PC-3 (cell line): ENCODE measurements at regions of chrX and their contacts with region 1.

Region 1: DNA sequence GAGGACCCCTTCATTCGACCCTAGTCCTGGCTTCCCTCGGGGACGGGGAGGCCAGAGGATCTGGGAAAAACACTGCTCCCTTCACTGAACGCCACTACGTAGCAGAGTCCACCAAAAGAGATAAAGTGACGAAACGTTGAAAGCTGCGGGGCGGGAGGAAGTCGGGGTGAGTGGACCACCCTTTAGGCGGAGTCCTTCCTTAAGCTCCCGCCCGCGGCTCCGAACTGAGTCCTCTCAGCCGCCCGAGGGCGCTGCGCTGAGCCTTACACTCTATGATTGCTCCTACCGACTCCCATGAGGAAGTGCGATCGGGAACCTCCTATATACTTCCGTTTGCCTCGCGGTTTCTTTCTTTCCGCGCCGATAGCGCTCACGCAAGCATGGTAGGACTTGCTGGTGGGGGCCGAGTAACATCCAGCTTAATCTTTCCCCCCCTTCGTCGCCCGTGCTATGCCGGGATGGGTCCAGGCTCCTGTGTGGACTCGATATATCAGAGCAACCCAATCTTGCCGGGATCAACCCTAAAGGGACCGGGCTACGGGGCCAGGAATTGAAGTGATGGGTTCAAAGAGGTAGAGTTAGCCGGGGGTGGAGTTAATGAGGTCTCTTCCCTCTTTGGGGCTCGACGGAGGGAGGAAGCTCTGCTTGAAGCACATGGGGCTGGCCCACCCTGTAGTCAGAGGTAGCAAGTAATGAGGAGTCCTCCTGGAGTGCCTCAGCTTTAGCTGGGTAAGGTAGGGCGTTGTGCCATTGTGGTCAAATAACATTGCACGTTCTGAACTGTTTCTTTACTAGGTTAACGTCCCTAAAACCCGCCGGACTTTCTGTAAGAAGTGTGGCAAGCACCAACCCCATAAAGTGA is at the start of gene RPL36A:
- DNase-seq: peak; percentile 93
- ATAC-seq: peak; percentile 97
- H3K4me3 ChIP-seq: peak within 1 kb of the TSS; percentile 95
- H3K27ac ChIP-seq: peak within 1 kb of the TSS; percentile 69
- H3K4me1 ChIP-seq: peaks cover 22% of the 10 kb centered on the region
- H3K27me3 ChIP-seq: no peaks in the 10 kb centered on the region
- CTCF ChIP-seq: peak; percentile 78
- total RNA-seq, gene RPL36A: 914 and 1,023 TPM in 2 replicates

Region 2: DNA sequence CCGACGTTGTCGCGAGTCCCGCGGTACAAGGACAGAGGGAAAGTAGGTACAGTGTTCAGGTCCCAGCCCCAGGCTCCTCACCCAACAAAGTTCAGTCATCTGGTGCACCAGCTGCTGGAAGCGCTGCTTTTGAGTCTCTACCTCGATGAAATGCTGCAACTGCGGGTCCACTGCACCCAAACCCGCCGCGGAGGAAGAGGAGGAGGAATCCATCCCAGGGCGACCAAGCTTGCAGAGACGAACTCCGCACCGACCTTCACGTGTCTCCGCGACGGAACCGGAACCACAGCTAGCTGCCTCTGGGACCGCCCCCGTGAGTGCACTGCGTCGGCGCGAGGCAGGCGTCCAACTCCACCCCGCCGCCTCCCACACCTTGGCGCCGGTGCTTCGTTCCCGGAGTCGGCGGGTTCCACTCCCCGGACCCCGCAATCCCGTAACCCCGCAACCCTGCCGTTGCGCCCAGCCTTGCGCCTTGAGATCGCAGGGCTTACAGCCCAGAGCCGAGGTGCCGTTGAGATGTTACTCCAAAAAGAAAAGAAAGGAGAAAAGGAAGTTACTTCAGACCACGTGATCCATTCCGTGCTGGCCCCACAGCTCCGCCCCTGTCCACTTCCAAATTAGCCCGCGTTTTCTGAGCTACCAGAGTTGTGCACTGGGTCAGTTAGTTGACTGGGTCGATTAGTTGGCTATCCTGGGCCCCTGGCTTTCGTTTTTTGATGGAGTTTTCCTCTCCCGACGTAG is 42.3 kb before region 1 on chrX and contains the start of gene TIMM8A:
- CTCF ChIA-PET with region 1: interaction called, 3 read pairs
- POLR2A ChIA-PET with region 1: no interaction called
- intact Hi-C with region 1: loop called (anchors 2 kb)
- DNase-seq: peak; percentile 77
- ATAC-seq: peak; percentile 94
- H3K4me3 ChIP-seq: peak within 1 kb of the TSS; percentile 96
- H3K27ac ChIP-seq: peak within 1 kb of the TSS; percentile 78
- H3K4me1 ChIP-seq: peaks cover 15% of the 10 kb centered on the region
- H3K27me3 ChIP-seq: no peaks in the 10 kb centered on the region
- CTCF ChIP-seq: no peak
- total RNA-seq, gene TIMM8A: 5.0 and 7.8 TPM in 2 replicates

Region 3: DNA sequence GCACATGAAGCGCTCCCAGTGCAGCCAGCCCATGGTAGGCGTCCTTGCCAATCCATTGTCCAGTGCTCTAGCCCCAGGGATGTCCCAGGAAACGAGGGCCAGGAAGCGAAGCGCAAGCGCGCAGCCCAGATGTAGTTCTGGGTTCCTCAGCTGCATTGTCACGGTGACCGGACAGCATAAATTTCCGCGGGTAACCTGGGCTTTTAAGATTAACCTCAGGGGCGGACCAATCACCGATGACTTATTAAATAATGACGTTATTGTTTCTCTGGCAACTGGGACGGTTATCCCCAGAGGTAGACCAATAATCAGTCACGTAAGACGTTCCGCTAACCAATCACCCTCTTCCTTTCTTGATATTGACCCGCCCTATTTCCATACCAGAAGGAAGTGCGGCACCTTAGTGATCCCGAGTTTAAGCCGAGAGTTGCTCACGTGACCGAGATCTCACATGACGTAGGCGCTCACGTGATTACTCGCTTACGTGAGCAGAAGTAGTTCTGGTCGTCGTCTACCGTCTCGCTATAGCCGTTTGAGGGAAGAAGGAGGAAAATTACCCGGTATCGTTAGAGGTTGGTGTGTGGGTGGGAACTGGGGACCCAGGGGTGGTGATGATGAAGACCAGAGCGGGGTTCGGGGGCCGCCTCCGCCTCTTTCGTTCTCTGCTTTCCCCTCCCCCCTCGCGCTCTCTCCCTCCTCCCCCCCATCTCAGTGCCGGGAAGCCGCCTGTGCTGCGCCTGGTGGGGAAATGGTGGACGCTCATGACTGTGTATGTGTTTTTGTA is 17.0 kb after region 1 on chrX and contains the starts of genes GLA and HNRNPH2:
- CTCF ChIA-PET with region 1: no interaction called
- POLR2A ChIA-PET with region 1: no interaction called
- intact Hi-C with region 1: loop called (anchors 1 kb)
- DNase-seq: peak; percentile 98
- ATAC-seq: peak; percentile 92
- H3K4me3 ChIP-seq: peak within 1 kb of the TSS; percentile 95
- H3K27ac ChIP-seq: peak within 1 kb of the TSS; percentile 84
- H3K4me1 ChIP-seq: peaks cover 12% of the 10 kb centered on the region
- H3K27me3 ChIP-seq: no peaks in the 10 kb centered on the region
- CTCF ChIP-seq: no peak
- total RNA-seq, gene GLA: 41.9 and 54.8 TPM in 2 replicates
- total RNA-seq, gene HNRNPH2: 54.8 TPM in 2 replicates

Region 4: DNA sequence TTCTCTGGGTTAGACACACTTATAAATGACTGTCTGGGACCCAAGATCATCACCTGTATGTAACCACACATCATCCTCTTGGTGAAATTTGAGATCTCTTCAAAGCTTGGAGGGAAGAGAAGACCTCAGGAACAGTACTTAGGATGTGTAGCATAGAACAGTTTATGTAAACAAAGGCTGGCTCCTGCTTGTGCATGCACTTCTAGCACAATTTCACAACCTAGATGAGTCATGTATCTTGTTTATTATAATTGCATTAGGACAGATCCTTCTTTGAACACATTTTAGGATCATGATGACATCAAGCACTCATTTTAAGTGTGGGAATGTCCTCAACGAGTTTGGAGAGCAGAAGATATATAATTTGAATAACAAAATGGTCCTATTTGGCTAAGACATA is 567.2 kb after region 1 on chrX:
- CTCF ChIA-PET with region 1: no interaction called
- POLR2A ChIA-PET with region 1: no interaction called
- intact Hi-C with region 1: no loop called
- DNase-seq: no peak
- ATAC-seq: no peak
- H3K4me3 ChIP-seq: no peak overlapping the region
- H3K27ac ChIP-seq: no peak overlapping the region
- H3K4me1 ChIP-seq: no peaks in the 10 kb centered on the region
- H3K27me3 ChIP-seq: no peaks in the 10 kb centered on the region
- CTCF ChIP-seq: no peak